ENCODE measurements at regions of chr1 and their contacts with region 1.

Region 1: DNA sequence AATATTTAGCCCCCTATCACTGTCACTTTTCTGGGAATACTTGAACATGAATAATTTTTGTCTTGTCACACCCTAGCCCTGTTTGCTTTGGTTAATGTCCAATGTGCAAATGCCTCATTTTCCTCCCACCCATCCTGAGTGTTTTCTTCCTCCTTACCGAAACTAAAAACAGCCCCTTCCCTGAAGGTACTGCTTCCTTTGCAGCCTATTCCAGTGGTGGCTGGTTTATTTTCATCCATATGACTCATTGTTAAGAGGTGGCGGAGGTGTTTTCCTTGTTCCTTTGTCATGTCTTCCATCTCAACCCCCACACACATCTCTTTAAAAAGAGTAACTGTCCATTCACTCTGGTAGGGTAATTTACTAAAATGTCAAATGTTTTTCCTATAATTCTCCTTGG is 40.4 kb downstream of the CD55 start:
- DNase-seq: no peak
- ATAC-seq: no peak
- H3K4me3 Mint-ChIP-seq: no peak overlapping the region
- H3K27ac Mint-ChIP-seq: no peak overlapping the region
- H3K4me1 Mint-ChIP-seq: peaks cover 11% of the 10 kb centered on the region
- H3K27me3 Mint-ChIP-seq: no peaks in the 10 kb centered on the region
- CTCF ChIP-seq: no peak

Region 2: DNA sequence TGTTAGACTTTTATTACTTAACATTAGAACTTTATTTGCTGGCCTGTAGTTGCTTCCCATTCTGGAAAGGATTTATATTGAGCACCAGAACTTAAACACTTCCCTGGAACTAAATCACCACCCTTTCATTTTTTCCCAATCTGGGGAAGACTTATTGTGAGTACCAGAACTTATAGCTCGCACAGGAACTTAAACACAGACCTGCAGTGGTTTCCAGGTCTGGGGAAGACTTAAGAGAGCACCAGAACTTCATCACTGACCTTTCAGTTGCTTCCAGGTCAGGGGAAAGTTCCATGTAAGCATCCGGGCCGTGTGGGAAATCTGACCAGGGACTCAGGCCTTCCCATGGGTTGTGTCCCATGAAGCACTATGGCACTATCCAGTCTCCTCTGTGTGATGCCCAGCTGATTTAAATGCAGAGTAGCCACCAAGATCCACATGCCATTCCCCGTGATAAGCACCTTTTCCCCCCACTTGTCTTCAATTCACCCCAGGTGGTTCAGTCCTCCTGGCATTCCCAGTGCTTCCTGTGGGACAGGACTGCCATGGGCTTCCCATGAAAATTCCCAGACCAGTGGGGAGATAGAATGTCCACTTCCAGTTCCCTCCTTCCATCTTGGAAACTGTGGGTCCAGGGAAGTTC is 209.0 kb before region 1 on chr1:
- CTCF ChIA-PET with region 1: no interaction called
- POLR2A ChIA-PET with region 1: no interaction called
- intact Hi-C with region 1: no loop called
- DNase-seq: no peak
- ATAC-seq: no peak
- H3K4me3 Mint-ChIP-seq: no peak overlapping the region
- H3K27ac Mint-ChIP-seq: no peak overlapping the region
- H3K4me1 Mint-ChIP-seq: no peaks in the 10 kb centered on the region
- H3K27me3 Mint-ChIP-seq: peaks cover 6% of the 10 kb centered on the region
- CTCF ChIP-seq: no peak

Region 3: DNA sequence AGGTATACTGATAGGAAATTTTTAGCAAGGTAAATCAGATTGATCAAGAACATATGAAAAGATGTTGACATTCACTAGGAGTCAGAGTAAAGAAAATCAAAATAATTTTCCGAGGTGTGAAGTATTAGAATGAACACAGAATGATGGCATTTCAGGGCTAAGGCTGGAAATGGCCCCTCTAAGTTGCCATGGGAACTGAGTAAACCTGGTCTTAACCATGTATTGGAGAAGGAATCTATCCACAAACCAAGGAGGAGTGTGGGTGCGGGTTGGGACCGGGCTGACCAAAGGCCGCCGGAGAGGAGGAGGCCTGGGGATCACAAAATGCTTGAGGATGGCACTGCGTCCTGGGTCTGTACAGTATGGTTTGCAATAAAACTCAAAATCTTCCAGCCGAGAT is 13.0 kb after region 1 on chr1:
- CTCF ChIA-PET with region 1: no interaction called
- POLR2A ChIA-PET with region 1: no interaction called
- intact Hi-C with region 1: loop called (anchors 2 kb)
- DNase-seq: no peak
- ATAC-seq: no peak
- H3K4me3 Mint-ChIP-seq: no peak overlapping the region
- H3K27ac Mint-ChIP-seq: no peak overlapping the region
- H3K4me1 Mint-ChIP-seq: peaks cover 3% of the 10 kb centered on the region
- H3K27me3 Mint-ChIP-seq: no peaks in the 10 kb centered on the region
- CTCF ChIP-seq: no peak

Region 4: GRCh38 chr1:207691841-207692240 is 330.0 kb after region 1 on chr1:
- CTCF ChIA-PET with region 1: no interaction called
- POLR2A ChIA-PET with region 1: no interaction called
- intact Hi-C with region 1: no loop called
- DNase-seq: no peak
- ATAC-seq: no peak
- H3K4me3 Mint-ChIP-seq: no peak overlapping the region
- H3K27ac Mint-ChIP-seq: no peak overlapping the region
- H3K4me1 Mint-ChIP-seq: no peaks in the 10 kb centered on the region
- H3K27me3 Mint-ChIP-seq: peaks cover 10% of the 10 kb centered on the region
- CTCF ChIP-seq: no peak

Measured in activated B cell treated with CpG ODN at 0.5 μM for 24 hours (primary cell).